Colonic mucosa (tissue), 4 donors: ENCODE measurements at regions of chr15 and their contacts with region 1.

Region 1: GRCh38 chr15:92949604-92950249 is 49.6 kb downstream of the CHD2 start:
- DNase-seq: no peak
- H3K4me3 ChIP-seq: no peak overlapping the region
- H3K27ac ChIP-seq: no peak overlapping the region
- H3K4me1 ChIP-seq: no peaks in the 10 kb centered on the region
- H3K27me3 ChIP-seq: no peaks in the 10 kb centered on the region
- CTCF ChIP-seq: no peak

Region 2: GRCh38 chr15:92981333-92981732 is 31.6 kb after region 1 on chr15:
- intact Hi-C with region 1: loop called (anchors 5 kb)
- DNase-seq: no peak
- H3K4me3 ChIP-seq: no peak overlapping the region
- H3K27ac ChIP-seq: no peak overlapping the region
- H3K4me1 ChIP-seq: no peaks in the 10 kb centered on the region
- H3K27me3 ChIP-seq: no peaks in the 10 kb centered on the region
- CTCF ChIP-seq: no peak

Region 3: DNA sequence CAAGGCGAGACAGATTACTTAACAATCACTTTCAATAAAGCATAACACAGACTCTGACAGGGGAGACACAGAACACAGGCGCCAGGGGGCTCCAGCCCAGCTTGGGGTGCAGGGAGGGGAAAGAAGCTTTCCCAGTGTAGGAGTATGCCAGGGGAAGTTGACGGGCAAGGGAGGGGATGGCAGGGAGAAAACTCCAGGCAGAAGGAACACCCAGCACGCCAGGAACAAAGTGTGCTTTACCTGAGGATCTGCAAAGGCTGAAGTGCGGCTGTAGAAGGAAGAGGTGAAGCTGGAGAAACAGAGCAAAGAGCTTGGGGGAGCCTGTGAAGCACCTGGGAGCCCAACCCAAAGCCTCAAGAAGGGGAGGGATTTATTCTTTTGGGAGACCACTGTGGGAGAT is 127.1 kb after region 1 on chr15:
- intact Hi-C with region 1: no loop called
- DNase-seq: no peak
- H3K4me3 ChIP-seq: no peak overlapping the region
- H3K27ac ChIP-seq: no peak overlapping the region
- H3K4me1 ChIP-seq: no peaks in the 10 kb centered on the region
- H3K27me3 ChIP-seq: peaks cover 24% of the 10 kb centered on the region
- CTCF ChIP-seq: no peak